Activated CD4-positive, alpha-beta memory T cell treated with anti-CD3 and anti-CD28 coated beads, Interleukin-2, amount 10 ng/mL, durations not matched to agents 7 days and 5 days (primary cell): ENCODE measurements at regions of chr12 and their contacts with region 1.

Region 1: GRCh38 chr12:132218915-132219314 is 74.7 kb downstream of the NOC4L start:
- DNase-seq: peak; percentile 36
- H3K4me3 Mint-ChIP-seq: no peak overlapping the region
- H3K27ac Mint-ChIP-seq: no peak overlapping the region
- H3K4me1 Mint-ChIP-seq: peaks cover 6% of the 10 kb centered on the region
- H3K27me3 Mint-ChIP-seq: peaks cover 2% of the 10 kb centered on the region

Region 2: DNA sequence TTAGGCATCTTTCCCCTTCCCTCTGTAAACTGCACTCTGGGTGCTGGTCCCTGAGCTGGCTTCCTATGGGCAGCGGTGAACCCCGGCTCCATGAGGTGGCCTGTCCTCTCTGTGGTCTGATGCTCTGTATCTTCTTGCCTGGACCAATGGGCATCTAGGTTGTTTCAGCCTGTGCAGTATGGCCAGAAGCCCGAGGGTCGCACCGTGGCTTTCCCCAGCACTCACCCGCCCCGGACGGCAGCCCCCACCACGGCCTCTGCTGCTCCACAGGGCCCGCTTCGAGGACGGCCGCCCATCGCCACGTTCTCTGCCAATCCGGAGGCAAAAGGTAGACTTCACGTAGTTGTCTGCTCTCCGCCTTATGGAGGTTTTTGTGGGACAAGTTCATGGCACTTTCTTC is 199.0 kb before region 1 on chr12:
- CTCF ChIA-PET with region 1: no interaction called
- POLR2A ChIA-PET with region 1: no interaction called
- DNase-seq: no peak
- H3K4me3 Mint-ChIP-seq: no peak overlapping the region
- H3K27ac Mint-ChIP-seq: no peak overlapping the region
- H3K4me1 Mint-ChIP-seq: no peaks in the 10 kb centered on the region
- H3K27me3 Mint-ChIP-seq: no peaks in the 10 kb centered on the region

Region 3: GRCh38 chr12:132030367-132031038 is 188.4 kb before region 1 on chr12:
- CTCF ChIA-PET with region 1: no interaction called
- POLR2A ChIA-PET with region 1: no interaction called
- DNase-seq: no peak
- H3K4me3 Mint-ChIP-seq: no peak overlapping the region
- H3K27ac Mint-ChIP-seq: no peak overlapping the region
- H3K4me1 Mint-ChIP-seq: no peaks in the 10 kb centered on the region
- H3K27me3 Mint-ChIP-seq: no peaks in the 10 kb centered on the region

Region 4: GRCh38 chr12:132153501-132154340 is 65.2 kb before region 1 on chr12:
- CTCF ChIA-PET with region 1: interaction called, 20 read pairs
- POLR2A ChIA-PET with region 1: no interaction called
- DNase-seq: peak; percentile 73
- H3K4me3 Mint-ChIP-seq: no peak overlapping the region
- H3K27ac Mint-ChIP-seq: no peak overlapping the region
- H3K4me1 Mint-ChIP-seq: no peaks in the 10 kb centered on the region
- H3K27me3 Mint-ChIP-seq: no peaks in the 10 kb centered on the region